K562 (cell line): ENCODE measurements at regions of chr10 and their contacts with region 1.

Region 1: GRCh38 chr10:51960494-51960895 is 261.1 kb upstream of the CSTF2T start:
- DNase-seq: peak; percentile 16 to 31 (median 22)
- ATAC-seq: no peak
- H3K4me3 ChIP-seq: no peak overlapping the region
- H3K27ac ChIP-seq: no peak overlapping the region
- H3K4me1 ChIP-seq: no peaks in the 10 kb centered on the region
- H3K27me3 ChIP-seq: no peaks in the 10 kb centered on the region
- CTCF ChIP-seq: peak in 2 of 3 experiments; percentile 28 to 48; a peak in 3 of 6 replicates
- EP300 ChIP-seq: no peak
- POLR2A ChIP-seq: no peak
- RAD21 ChIP-seq: peak; percentile 47 to 57

Region 2: GRCh38 chr10:51001587-51001986 is 958.9 kb before region 1 on chr10:
- CTCF ChIA-PET with region 1: no interaction called
- POLR2A ChIA-PET with region 1: no interaction called
- in situ Hi-C with region 1: no loop called
- intact Hi-C with region 1: loop called (anchors 10 kb)
- DNase-seq: peak in 3 of 4 experiments; percentile 18 to 32 (median 31)
- ATAC-seq: peak; percentile 86
- H3K4me3 ChIP-seq: no peak overlapping the region
- H3K27ac ChIP-seq: no peak overlapping the region
- H3K4me1 ChIP-seq: no peaks in the 10 kb centered on the region
- H3K27me3 ChIP-seq: no peaks in the 10 kb centered on the region
- CTCF ChIP-seq: peak; percentile 38 to 69 (median 55); a peak in 5 of 6 replicates
- EP300 ChIP-seq: no peak
- POLR2A ChIP-seq: no peak
- RAD21 ChIP-seq: peak; percentile 57 to 71

Region 3: DNA sequence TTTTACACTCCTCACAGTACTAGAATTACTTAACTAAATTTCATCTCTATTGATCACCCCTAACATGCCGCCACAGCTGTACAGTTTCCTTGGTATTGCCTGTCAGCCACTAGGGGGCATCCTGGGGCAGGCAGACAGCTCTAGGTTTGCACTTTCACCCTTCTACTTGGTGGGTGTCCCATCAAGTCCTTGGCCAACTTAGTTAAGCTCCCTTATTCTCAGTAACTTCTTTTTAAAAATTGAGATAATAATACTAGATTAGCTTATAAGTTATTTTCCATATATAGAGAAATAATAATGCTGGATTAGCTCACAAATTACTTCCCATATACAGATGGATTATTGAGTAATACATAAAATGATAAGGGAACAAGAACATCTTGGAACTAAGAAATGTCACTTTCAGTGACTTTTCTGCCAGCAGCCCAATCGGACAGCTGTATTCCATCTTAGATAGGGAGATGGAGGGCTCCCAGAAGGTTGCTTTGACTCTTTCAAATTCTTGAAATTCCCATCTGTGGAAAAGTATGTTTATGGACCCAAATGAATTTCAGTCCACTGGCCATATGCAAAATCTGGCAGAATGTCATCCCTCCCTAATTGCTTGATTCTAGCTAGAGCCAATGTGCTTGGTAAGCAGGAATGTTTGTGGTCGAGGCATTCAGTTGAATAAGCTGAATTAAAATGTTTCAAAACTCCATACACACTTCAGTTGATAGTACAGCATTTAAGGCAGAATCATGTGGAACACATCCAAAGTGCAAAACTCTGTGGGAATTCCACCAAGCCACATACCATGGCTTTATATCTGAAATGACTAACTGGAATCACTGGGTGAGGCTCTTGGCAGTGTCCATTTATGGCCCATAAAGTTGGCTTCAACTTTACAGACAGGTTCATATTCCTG is 570.8 kb before region 1 on chr10:
- CTCF ChIA-PET with region 1: no interaction called
- POLR2A ChIA-PET with region 1: no interaction called
- in situ Hi-C with region 1: no loop called
- intact Hi-C with region 1: loop called (anchors 5 kb)
- DNase-seq: peak; percentile 15 to 55 (median 52)
- ATAC-seq: peak; percentile 79
- H3K4me3 ChIP-seq: no peak overlapping the region
- H3K27ac ChIP-seq: no peak overlapping the region
- H3K4me1 ChIP-seq: no peaks in the 10 kb centered on the region
- H3K27me3 ChIP-seq: no peaks in the 10 kb centered on the region
- CTCF ChIP-seq: peak; percentile 51 to 77 (median 66)
- EP300 ChIP-seq: no peak
- POLR2A ChIP-seq: no peak
- RAD21 ChIP-seq: peak; percentile 75 to 78